ENCODE measurements at regions of chr11 and their contacts with region 1.

Region 1: DNA sequence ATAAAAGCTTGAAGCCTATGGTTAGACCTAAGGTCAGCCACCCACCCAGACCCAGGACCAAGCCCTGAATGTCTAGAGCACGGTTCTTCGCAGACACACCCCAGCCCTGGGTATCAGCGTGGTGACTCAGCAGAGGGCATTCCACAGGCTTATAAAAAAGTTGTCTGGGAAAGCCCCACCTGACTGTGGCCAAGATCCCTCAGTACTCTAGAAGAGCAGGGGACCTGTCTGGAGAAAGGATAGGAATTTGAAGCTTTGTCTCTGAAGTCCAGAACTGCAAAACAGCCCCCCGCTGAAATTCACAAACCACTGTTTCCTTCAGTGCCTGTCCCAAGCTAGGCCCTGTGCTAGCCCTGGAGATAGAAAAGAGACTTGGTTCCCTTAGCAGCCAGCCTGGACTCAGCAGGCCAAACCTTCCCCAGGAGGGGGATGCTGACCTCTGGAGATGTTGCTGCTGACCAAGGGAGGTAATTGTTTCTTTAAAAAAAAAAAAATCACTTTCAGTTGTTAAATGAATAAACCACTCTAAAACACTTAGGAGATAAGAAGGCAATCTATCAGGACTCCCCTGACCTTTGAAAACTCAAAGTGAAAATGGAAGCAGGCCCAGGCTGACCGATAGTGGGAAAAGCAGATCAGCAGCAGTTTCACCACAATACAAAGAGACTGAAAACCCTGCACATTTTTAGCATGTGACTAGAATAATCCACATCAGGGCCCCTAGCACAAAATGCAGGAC is 113.9 kb downstream of the ABTB2 start:
- DNase-seq: peak; percentile 85
- ATAC-seq: peak; percentile 64
- H3K4me3 Mint-ChIP-seq: peak overlapping the region; percentile 21
- H3K27ac Mint-ChIP-seq: peak overlapping the region; percentile 77
- H3K4me1 Mint-ChIP-seq: peaks cover 92% of the 10 kb centered on the region
- H3K27me3 Mint-ChIP-seq: no peaks in the 10 kb centered on the region
- CTCF ChIP-seq: no peak

Region 2: GRCh38 chr11:33893711-33894397 is 350.0 kb before region 1 on chr11:
- CTCF ChIA-PET with region 1: no interaction called
- POLR2A ChIA-PET with region 1: interaction called, 3 read pairs
- intact Hi-C with region 1: loop called (anchors 10 kb)
- DNase-seq: peak; percentile 91
- ATAC-seq: peak; percentile 89
- H3K4me3 Mint-ChIP-seq: peak overlapping the region; percentile 42
- H3K27ac Mint-ChIP-seq: peak overlapping the region; percentile 78
- H3K4me1 Mint-ChIP-seq: peaks cover 47% of the 10 kb centered on the region
- H3K27me3 Mint-ChIP-seq: peaks cover 55% of the 10 kb centered on the region
- CTCF ChIP-seq: no peak

Region 3: GRCh38 chr11:34145847-34146381 is 98.0 kb before region 1 on chr11:
- CTCF ChIA-PET with region 1: no interaction called
- POLR2A ChIA-PET with region 1: no interaction called
- intact Hi-C with region 1: no loop called
- DNase-seq: no peak
- ATAC-seq: no peak
- H3K4me3 Mint-ChIP-seq: no peak overlapping the region
- H3K27ac Mint-ChIP-seq: no peak overlapping the region
- H3K4me1 Mint-ChIP-seq: no peaks in the 10 kb centered on the region
- H3K27me3 Mint-ChIP-seq: no peaks in the 10 kb centered on the region
- CTCF ChIP-seq: no peak

Region 4: GRCh38 chr11:34214961-34215805 is 28.7 kb before region 1 on chr11:
- CTCF ChIA-PET with region 1: interaction called, 3 read pairs
- POLR2A ChIA-PET with region 1: interaction called, 3 read pairs
- intact Hi-C with region 1: loop called (anchors 5 kb)
- DNase-seq: peak; percentile 95
- ATAC-seq: peak; percentile 99
- H3K4me3 Mint-ChIP-seq: no peak overlapping the region
- H3K27ac Mint-ChIP-seq: peak overlapping the region; percentile 88
- H3K4me1 Mint-ChIP-seq: peaks cover 30% of the 10 kb centered on the region
- H3K27me3 Mint-ChIP-seq: peaks cover 3% of the 10 kb centered on the region
- CTCF ChIP-seq: no peak

Region 5: DNA sequence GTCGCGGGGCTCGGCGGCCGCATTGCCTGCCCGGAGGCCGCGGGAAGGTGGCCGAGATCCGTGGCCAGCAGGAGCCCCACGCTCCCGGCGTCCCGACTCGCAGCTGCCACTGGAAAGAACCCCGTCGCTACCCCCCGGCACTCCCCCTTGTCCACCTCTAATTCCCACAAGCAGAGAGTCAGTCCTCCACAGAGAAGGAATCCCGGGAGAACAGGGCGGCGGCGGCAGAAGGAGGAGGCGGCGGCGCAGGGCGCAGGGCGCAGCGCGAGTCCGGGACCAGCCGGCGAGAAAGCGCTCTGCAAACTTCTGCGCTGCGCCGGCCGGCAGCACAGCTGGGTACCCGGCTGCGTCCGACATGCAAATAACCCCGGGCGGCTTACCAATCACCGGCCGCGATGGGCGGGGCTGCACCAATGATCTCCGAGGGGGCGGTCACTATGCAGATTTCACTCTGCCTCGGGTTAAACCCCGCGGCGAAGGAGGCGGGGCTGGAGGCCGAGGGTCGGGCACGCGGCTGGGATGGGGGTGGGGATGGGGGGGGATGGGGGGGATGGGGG is 113.9 kb after region 1 on chr11 and contains the start of gene ABTB2:
- CTCF ChIA-PET with region 1: interaction called, 6 read pairs
- POLR2A ChIA-PET with region 1: interaction called, 5 read pairs
- intact Hi-C with region 1: loop called (anchors 5 kb)
- DNase-seq: peak; percentile 99
- ATAC-seq: peak; percentile 92
- H3K4me3 Mint-ChIP-seq: peak within 1 kb of the TSS; percentile 76
- H3K27ac Mint-ChIP-seq: peak within 1 kb of the TSS; percentile 77
- H3K4me1 Mint-ChIP-seq: peaks cover 28% of the 10 kb centered on the region
- H3K27me3 Mint-ChIP-seq: peaks cover 35% of the 10 kb centered on the region
- CTCF ChIP-seq: no peak
- total RNA-seq, gene ABTB2: 2.4 to 2.5 TPM